ENCODE measurements at regions of chr11 and their contacts with region 1.

Region 1: GRCh38 chr11:85540635-85541205 is 86.4 kb downstream of the DLG2 start:
- DNase-seq: no peak
- ATAC-seq: no peak
- H3K4me3 ChIP-seq: no peak overlapping the region
- H3K27ac ChIP-seq: no peak overlapping the region
- H3K4me1 ChIP-seq: no peaks in the 10 kb centered on the region
- H3K27me3 ChIP-seq: no peaks in the 10 kb centered on the region
- CTCF ChIP-seq: no peak
- EP300 ChIP-seq: no peak
- POLR2A ChIP-seq: no peak
- RAD21 ChIP-seq: no peak

Region 2: GRCh38 chr11:84993386-84993785 is 547.3 kb before region 1 on chr11:
- CTCF ChIA-PET with region 1: no interaction called
- POLR2A ChIA-PET with region 1: no interaction called
- RAD21 ChIA-PET with region 1: no interaction called
- SMC1A ChIA-PET with region 1: no interaction called
- in situ Hi-C with region 1: no loop called
- intact Hi-C with region 1: loop called (anchors 5 kb)
- DNase-seq: no peak
- ATAC-seq: peak; percentile 53; the same call in 1 of the 3 replicates
- H3K4me3 ChIP-seq: no peak overlapping the region
- H3K27ac ChIP-seq: no peak overlapping the region
- H3K4me1 ChIP-seq: no peaks in the 10 kb centered on the region
- H3K27me3 ChIP-seq: no peaks in the 10 kb centered on the region
- CTCF ChIP-seq: peak; percentile 19 to 30 (median 22); a peak in 3 of 6 replicates
- EP300 ChIP-seq: no peak
- POLR2A ChIP-seq: no peak
- RAD21 ChIP-seq: 0 out of 2 replicates have a peak, but pooled peaks have one; percentile 6

Region 3: DNA sequence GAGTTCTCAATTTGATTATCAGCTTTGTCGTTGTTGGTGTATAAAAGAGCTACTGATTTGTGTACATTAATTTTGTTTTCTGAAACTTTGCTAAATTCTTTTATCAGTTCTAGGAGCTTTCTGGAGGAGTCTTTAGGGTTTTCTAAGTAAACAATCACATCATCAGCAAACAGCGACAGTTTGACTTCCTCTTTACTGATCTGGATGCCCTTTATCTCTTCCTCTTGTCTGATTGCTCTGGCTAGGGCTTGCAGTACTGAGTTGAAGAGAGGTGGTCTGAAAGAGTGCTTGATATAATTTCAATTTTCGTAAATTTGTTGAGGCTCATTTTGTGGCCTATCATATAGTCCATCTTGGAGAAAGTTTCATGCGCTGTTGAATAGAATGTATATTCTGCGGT is 126.5 kb before region 1 on chr11:
- CTCF ChIA-PET with region 1: no interaction called
- POLR2A ChIA-PET with region 1: no interaction called
- RAD21 ChIA-PET with region 1: no interaction called
- SMC1A ChIA-PET with region 1: no interaction called
- in situ Hi-C with region 1: no loop called
- intact Hi-C with region 1: no loop called
- DNase-seq: no peak
- ATAC-seq: no peak
- H3K4me3 ChIP-seq: no peak overlapping the region
- H3K27ac ChIP-seq: no peak overlapping the region
- H3K4me1 ChIP-seq: no peaks in the 10 kb centered on the region
- H3K27me3 ChIP-seq: no peaks in the 10 kb centered on the region
- CTCF ChIP-seq: no peak
- EP300 ChIP-seq: no peak
- POLR2A ChIP-seq: no peak
- RAD21 ChIP-seq: no peak

Region 4: DNA sequence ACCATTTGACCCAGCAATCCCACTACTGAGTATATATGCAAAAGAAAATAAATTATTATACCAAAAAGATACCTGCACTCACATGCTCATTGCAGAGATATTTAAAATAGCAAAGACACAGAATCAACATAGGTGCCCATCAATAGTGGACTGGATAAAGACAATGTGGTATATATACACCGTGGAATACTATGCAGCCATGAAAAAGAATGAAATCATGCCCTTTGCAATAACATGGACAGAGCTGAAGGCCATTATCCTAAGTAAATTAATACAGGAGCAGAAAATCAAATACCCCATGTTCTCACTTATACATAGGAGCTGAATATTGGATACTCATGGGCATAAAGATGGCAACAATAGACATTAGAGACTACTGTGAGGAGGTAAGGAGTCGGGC is 17.7 kb after region 1 on chr11:
- CTCF ChIA-PET with region 1: no interaction called
- POLR2A ChIA-PET with region 1: no interaction called
- RAD21 ChIA-PET with region 1: no interaction called
- SMC1A ChIA-PET with region 1: no interaction called
- in situ Hi-C with region 1: no loop called
- intact Hi-C with region 1: no loop called
- DNase-seq: no peak
- ATAC-seq: no peak
- H3K4me3 ChIP-seq: no peak overlapping the region
- H3K27ac ChIP-seq: no peak overlapping the region
- H3K4me1 ChIP-seq: no peaks in the 10 kb centered on the region
- H3K27me3 ChIP-seq: no peaks in the 10 kb centered on the region
- CTCF ChIP-seq: no peak
- EP300 ChIP-seq: no peak
- POLR2A ChIP-seq: no peak
- RAD21 ChIP-seq: no peak